Activated naive CD4-positive, alpha-beta T cell treated with anti-CD3 and anti-CD28 coated beads for 36 hours (primary cell): ENCODE measurements at regions of chr2 and their contacts with region 1.

Region 1: GRCh38 chr2:18520451-18521425 is 39.7 kb downstream of the RDH14 start:
- DNase-seq: peak; percentile 81
- H3K4me3 Mint-ChIP-seq: no peak overlapping the region
- H3K27ac Mint-ChIP-seq: no peak overlapping the region
- H3K4me1 Mint-ChIP-seq: no peaks in the 10 kb centered on the region
- H3K27me3 Mint-ChIP-seq: peaks cover 18% of the 10 kb centered on the region

Region 2: GRCh38 chr2:18387441-18388206 is 133.1 kb before region 1 on chr2:
- CTCF ChIA-PET with region 1: interaction called, 7 read pairs
- intact Hi-C with region 1: loop called (anchors 2 kb)
- DNase-seq: peak; percentile 74
- H3K4me3 Mint-ChIP-seq: no peak overlapping the region
- H3K27ac Mint-ChIP-seq: no peak overlapping the region
- H3K4me1 Mint-ChIP-seq: no peaks in the 10 kb centered on the region
- H3K27me3 Mint-ChIP-seq: no peaks in the 10 kb centered on the region

Region 3: DNA sequence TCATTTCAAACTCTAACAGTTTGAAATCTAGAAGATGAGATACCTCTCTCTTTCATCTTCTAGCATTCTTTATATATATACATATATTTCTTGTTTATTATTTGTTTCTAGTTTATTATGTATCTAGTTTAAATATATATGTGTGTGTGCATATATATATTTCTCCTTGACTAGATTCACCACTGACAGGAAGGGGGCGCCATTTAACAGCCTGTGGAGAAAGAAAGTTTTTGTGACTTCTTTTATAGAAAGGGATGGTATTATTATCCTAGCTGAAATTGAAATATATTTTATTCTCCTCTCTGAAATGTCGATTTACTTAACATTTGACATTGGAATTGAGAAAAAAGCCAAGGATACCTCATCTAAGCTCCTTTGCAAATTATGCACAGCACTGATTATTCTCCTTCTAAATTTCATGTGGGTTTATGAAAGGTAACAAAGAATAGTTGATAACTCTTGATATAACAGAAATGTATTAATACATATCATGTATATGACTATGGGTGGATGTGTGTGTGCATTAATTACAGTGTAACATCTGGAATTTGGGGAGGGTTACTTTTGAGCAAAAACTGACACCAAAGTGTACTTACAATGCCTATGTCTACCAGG is 229.3 kb after region 1 on chr2:
- CTCF ChIA-PET with region 1: interaction called, 10 read pairs
- intact Hi-C with region 1: loop called (anchors 2 kb)
- DNase-seq: peak; percentile 75
- H3K4me3 Mint-ChIP-seq: no peak overlapping the region
- H3K27ac Mint-ChIP-seq: no peak overlapping the region
- H3K4me1 Mint-ChIP-seq: no peaks in the 10 kb centered on the region
- H3K27me3 Mint-ChIP-seq: no peaks in the 10 kb centered on the region